Right ventricle myocardium superior (tissue), 1 donor: ENCODE measurements at regions of chr5 and their contacts with region 1.

Region 1: GRCh38 chr5:159444441-159445082 is 114.3 kb upstream of the IL12B start:
- DNase-seq: no peak
- ATAC-seq: peak; percentile 18

Region 2: GRCh38 chr5:159386028-159386711 is 58.4 kb before region 1 on chr5:
- intact Hi-C with region 1: no loop called
- DNase-seq: no peak
- ATAC-seq: no peak

Region 3: GRCh38 chr5:159510282-159510681 is 65.7 kb after region 1 on chr5:
- intact Hi-C with region 1: loop called (anchors 5 kb)
- DNase-seq: peak; percentile 90
- ATAC-seq: peak; percentile 95

Region 4: GRCh38 chr5:159987031-159987674 is 542.6 kb after region 1 on chr5:
- intact Hi-C with region 1: loop called (anchors 5 kb)
- DNase-seq: peak; percentile 87
- ATAC-seq: peak; percentile 98